GM10248 (cell line): ENCODE measurements at regions of chr14 and their contacts with region 1.

Region 1: GRCh38 chr14:21723431-21724045 is 49.9 kb upstream of the OR4E1 start:
- DNase-seq: peak; percentile 12
- CTCF ChIP-seq: peak; percentile 15

Region 2: DNA sequence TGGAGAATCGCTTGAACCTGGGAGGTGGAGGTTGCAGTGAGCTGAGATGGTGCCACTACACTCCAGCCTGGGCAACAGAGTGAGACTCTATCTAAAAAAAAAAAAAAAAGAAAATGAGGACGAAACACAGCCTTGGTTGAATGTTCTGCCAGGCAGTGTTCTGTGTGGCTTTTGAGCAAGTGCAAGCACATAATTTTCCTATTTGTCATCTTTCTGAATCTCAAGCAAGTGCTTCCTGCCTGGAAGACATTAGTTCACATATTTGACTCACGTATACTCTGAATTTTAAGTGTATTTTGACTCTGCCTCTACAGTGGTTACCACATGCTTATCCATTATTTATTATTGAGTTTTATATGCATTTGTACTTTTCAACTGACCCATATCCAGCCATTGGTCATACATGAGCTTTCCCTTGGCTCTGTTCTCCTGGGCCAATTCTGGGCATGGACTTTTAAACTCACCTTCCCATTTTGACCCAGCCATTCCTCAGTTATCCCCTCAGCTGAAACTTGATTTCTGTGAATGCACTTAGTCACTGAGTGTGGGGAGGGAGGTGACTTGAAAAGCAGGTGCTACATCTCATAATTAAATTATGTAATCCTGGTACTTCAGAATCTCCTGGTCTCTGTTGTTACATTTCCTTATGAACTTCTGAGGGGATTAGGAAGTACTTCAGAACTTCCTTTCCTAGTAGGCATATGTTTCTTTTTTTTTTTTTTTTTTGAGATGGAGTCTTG is 96.9 kb before region 1 on chr14:
- CTCF ChIA-PET with region 1: no interaction called
- POLR2A ChIA-PET with region 1: no interaction called
- DNase-seq: no peak
- CTCF ChIP-seq: no peak

Region 3: DNA sequence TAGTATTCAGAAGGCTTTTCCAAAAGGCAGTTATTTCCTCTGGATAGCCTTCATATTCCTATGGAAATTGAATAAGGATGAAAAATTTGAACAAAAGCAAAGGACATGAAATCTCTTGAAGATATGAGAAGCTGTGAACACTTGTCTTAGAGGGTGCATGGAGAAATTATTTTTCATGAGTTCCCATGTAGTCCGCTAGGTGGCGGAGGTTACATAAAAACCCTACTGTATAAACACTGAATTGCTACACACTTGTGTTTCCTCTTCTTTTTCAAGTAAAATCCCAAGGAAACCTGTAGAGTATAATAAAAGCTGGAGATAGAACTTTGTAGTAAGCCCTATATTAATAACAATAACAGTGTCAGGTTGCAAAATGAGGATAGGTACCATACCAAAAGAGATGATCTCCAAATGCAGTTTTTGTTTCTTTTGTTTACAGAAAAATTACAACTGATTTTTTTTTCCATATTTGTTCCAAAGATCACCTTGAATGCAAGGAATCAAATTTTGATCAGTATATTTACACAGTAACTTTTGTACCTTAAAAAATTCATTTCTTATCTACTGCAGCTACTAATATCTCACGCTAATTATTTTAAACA is 12.1 kb before region 1 on chr14:
- CTCF ChIA-PET with region 1: interaction called, 24 read pairs
- POLR2A ChIA-PET with region 1: no interaction called
- DNase-seq: peak; percentile 52
- CTCF ChIP-seq: peak; percentile 73

Region 4: DNA sequence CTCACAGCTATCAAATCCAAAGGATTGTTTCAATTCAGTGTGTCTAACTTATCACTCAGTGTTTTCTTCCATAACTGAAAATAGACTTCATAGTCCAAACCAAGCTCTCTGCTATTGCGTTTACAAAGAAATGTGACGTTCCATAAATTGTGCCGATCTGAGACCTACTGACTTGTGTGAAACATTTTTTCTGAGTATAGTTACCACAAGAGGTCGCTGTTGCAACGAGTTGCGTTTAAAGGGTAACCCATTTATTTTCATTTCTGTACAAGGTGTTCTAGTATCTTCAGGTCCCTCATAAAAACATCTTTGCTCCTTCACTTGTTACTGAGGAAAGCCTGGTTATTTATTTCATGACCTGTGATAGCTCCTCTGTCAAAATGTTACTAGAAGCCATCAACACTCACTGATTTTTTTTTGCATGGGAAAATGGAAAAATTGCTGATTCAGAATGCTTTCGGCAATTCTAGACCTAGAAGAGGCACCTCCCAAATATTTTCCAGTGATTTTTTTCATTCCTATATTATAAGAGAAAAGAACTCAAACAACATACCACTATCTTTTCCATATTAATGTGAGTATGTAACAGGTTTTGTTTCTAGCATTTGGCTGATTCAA is 11.0 kb after region 1 on chr14:
- CTCF ChIA-PET with region 1: interaction called, 15 read pairs
- POLR2A ChIA-PET with region 1: no interaction called
- DNase-seq: peak; percentile 35
- CTCF ChIP-seq: peak; percentile 49